ENCODE measurements at regions of chr5 and their contacts with region 1.

Region 1: DNA sequence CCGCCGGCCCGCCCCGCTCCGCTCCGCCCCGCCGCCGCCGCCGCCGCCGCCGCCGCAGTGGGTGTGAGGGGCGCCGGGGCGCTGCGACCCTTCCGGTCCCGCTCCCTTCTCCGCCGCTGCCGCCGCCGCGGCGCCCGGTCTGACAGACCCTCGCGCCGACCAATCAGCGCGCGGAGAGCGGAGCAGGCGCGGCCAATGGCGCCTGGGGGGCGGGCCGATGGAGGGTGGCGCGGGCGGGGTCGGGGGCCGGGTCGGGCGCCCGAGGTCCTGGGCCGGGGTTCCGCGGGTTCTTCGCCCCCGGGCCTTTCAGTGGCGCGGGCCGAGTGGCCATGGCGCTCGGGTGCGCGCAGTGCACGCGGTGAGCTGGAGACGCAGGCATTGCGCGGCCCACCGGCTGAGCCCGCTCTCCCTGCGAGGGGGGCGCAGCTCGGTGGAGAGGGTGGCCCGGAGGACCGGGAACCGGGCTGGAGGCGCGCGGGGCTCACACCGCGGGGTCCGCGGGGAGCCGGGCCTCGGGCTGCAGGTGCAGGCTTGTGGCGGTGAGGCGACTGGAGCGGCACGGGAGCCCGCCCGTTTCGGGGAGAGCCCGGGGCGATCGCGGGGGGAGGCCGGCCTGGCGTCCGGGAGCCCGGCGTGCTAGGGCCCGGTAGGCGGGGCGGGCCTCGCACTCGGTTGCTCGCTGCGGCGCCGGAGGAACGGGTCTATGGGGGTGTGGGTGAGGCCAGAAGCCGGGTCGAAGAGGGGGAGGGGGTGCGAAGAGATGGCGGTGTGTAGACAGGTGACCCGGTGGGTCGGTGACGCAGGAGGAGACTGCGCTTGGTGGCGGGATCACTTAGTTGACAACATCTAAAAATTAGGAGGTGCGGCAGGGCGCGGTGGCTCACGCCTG is at the start of gene MAPK9:
- DNase-seq: peak; percentile 92
- total RNA-seq, gene MAPK9: 27.9 to 34.9 TPM

Region 2: DNA sequence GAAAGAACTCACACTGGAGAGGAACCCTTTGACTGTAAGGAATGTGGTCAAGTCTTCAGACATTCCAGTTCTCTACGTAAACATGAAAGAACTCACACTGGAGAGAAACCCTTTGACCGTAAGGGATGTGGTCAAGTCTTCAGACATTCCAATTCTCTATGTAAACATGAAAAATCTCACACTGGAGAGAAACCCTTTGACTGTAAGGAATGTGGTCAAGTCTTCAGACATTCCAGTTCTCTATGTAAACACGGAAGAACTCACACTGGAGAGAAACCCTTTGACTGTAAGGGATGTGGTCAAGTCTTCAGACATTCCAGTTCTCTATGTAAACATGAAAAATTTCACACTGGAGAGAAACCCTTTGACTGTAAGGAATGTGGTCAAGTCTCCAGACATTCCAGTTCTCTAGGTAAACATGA is 32.9 kb before region 1 on chr5:
- intact Hi-C with region 1: no loop called
- DNase-seq: no peak

Region 3: GRCh38 chr5:180470966-180471582 is 178.9 kb after region 1 on chr5:
- intact Hi-C with region 1: loop called (anchors 2 to 10 kb)
- DNase-seq: peak; percentile 82

Measured in posterior vena cava (tissue), 2 donors.